ENCODE measurements at regions of chr18 and their contacts with region 1.

Region 1: GRCh38 chr18:42157878-42158277 is 202.8 kb downstream of the PIK3C3 start:
- DNase-seq: no peak
- ATAC-seq: no peak
- H3K4me3 ChIP-seq: no peak overlapping the region
- H3K27ac ChIP-seq: no peak overlapping the region
- H3K4me1 ChIP-seq: no peaks in the 10 kb centered on the region
- H3K27me3 ChIP-seq: no peaks in the 10 kb centered on the region
- CTCF ChIP-seq: no peak
- EP300 ChIP-seq: no peak
- POLR2A ChIP-seq: no peak
- RAD21 ChIP-seq: no peak

Region 2: GRCh38 chr18:42141439-42141838 is 16.4 kb before region 1 on chr18:
- CTCF ChIA-PET with region 1: no interaction called
- POLR2A ChIA-PET with region 1: no interaction called
- RAD21 ChIA-PET with region 1: no interaction called
- SMC1A ChIA-PET with region 1: interaction called, 14 read pairs
- in situ Hi-C with region 1: no loop called
- intact Hi-C with region 1: no loop called
- DNase-seq: no peak
- ATAC-seq: no peak
- H3K4me3 ChIP-seq: no peak overlapping the region
- H3K27ac ChIP-seq: no peak overlapping the region
- H3K4me1 ChIP-seq: no peaks in the 10 kb centered on the region
- H3K27me3 ChIP-seq: no peaks in the 10 kb centered on the region
- CTCF ChIP-seq: no peak
- EP300 ChIP-seq: no peak
- POLR2A ChIP-seq: no peak
- RAD21 ChIP-seq: no peak